Activated naive CD4-positive, alpha-beta T cell treated with anti-CD3 and anti-CD28 coated beads for 36 hours (primary cell): ENCODE measurements at regions of chr6 and their contacts with region 1.

Region 1: DNA sequence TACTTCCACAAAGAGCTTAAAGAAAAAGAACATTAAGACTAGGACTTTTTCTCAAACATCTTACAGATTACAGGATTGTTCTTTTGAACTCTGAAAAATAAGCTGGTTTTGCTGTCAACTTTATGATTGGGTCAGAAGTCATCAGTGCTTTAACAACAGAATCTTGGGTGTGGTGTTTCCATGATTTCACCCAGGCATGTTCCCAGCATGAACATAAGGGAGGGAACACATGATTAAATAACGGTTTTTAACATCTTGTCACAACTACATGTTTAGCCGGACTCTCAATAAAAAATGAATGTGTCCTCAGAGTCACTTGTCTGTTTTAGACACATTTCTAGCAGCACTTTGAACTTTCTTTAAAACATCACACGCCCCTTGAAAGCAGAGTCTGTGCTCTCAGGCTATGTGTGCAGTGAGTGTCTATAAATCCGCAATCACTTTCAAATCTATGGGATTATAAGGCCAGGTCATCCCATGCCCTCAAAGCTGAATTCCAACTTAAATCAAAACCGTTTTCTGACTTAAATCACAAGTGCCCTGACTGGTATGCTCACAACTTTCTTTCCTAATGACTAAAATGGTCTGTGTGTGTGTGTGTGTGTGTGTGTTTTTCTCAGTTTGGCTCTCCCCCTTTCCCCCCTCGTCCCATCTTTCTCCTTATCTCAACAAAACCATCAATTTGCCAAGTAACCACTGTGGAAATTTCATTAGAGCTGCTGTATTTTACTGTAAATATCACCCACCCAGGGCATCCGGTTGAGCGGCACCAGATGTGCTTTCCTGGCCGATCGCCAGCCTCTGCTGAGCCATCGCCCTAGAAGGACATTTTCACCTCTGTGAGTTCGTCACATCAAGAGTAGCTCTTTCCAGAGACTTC is 216.8 kb upstream of the DTNBP1 start:
- DNase-seq: peak; percentile 84
- H3K4me3 Mint-ChIP-seq: peak overlapping the region; percentile 29
- H3K27ac Mint-ChIP-seq: peak overlapping the region; percentile 80
- H3K4me1 Mint-ChIP-seq: peaks cover 26% of the 10 kb centered on the region
- H3K27me3 Mint-ChIP-seq: no peaks in the 10 kb centered on the region

Region 2: GRCh38 chr6:15893556-15894268 is 14.1 kb after region 1 on chr6:
- CTCF ChIA-PET with region 1: interaction called, 4 read pairs
- intact Hi-C with region 1: loop called (anchors 1 kb)
- DNase-seq: no peak
- H3K4me3 Mint-ChIP-seq: no peak overlapping the region
- H3K27ac Mint-ChIP-seq: no peak overlapping the region
- H3K4me1 Mint-ChIP-seq: no peaks in the 10 kb centered on the region
- H3K27me3 Mint-ChIP-seq: peaks cover 2% of the 10 kb centered on the region